ENCODE measurements at regions of chr7 and their contacts with region 1.

Region 1: DNA sequence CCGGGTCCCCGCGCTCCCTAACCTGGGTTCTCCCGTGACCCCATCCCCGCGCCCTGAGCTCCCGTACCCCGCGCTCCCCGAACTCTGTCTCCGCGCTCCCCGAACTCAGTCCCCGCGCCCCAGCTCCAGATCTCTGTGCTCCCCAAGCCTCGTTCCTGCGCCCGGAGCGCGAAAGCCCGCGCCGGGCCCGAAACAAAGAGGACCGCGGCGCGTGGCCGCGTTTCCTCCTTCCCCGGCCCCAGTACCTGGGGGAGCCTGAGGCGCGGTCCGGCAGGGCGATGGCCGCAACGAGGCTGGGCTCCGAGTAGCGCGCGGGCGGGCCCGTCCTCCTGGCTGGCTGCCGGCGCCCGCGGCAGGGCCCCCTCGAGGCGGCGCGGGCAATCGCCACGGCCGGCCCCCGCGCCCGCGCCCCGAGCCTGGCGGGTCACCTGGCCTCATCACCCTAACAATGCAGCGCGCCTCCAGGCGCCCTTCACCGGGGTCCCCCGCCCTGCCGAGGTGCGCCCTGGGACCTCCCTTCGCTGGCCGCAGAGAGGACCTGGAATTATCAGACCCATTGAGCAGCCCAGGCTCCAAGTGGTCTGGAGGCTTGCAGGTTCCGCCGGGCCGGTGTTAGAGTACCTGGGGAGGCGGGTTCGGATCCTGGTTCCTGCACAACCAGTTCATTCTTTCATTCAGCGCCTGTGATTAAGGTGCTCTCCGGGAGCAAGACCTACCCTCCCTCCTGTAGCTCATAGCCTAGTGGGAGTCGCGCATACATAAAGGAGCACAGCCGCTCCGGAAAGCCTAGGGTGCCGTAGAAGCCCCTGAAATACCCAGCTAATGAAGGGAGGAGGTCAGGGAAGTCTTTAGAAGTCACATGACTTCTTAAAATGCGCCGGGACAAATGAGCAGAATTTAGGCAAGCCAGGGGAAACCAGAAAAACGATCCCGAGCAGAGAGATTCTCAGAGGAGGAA is at the start of gene TNS3:
- DNase-seq: no peak
- ATAC-seq: peak; percentile 37 to 50
- H3K4me3 ChIP-seq: peak within 1 kb of the TSS; percentile 70 to 84 (median 74)
- H3K27ac ChIP-seq: peak within 1 kb of the TSS; percentile 62 to 76 (median 70)
- H3K4me1 ChIP-seq: peaks cover 21 to 27% of the 10 kb centered on the region in 2 donors
- H3K27me3 ChIP-seq: peaks cover 0 to 3% (median 0%) of the 10 kb centered on the region in 3 donors
- CTCF ChIP-seq: peak in 4 of 5 experiments; percentile 6 to 41 (median 25)
- POLR2A ChIP-seq: peak in 1 of 2 donors; percentile 20
- total RNA-seq, gene TNS3: 39.4 to 64.3 (median 50.5) TPM

Region 2: GRCh38 chr7:47444379-47445057 is 137.6 kb before region 1 on chr7:
- in situ Hi-C with region 1: loop called in 3 of 4 experiments (anchors 10 to 25 kb)
- intact Hi-C with region 1: loop called (anchors 2 kb)
- DNase-seq: no peak
- ATAC-seq: peak in 1 of 2 donors; percentile 29
- H3K4me3 ChIP-seq: no peak overlapping the region
- H3K27ac ChIP-seq: peak overlapping the region; percentile 91 to 98 (median 94)
- H3K4me1 ChIP-seq: peaks cover 70 to 73% of the 10 kb centered on the region in 2 donors
- H3K27me3 ChIP-seq: no peaks in the 10 kb centered on the region
- CTCF ChIP-seq: peak; percentile 46 to 66 (median 59)
- POLR2A ChIP-seq: no peak

Region 3: GRCh38 chr7:47506382-47507339 is 75.4 kb before region 1 on chr7:
- in situ Hi-C with region 1: no loop called
- intact Hi-C with region 1: loop called (anchors 5 kb)
- DNase-seq: no peak
- ATAC-seq: peak; percentile 15 to 18
- H3K4me3 ChIP-seq: no peak overlapping the region
- H3K27ac ChIP-seq: peak overlapping the region; percentile 57 to 68 (median 64)
- H3K4me1 ChIP-seq: peaks cover 22 to 27% of the 10 kb centered on the region in 2 donors
- H3K27me3 ChIP-seq: no peaks in the 10 kb centered on the region
- CTCF ChIP-seq: no peak
- POLR2A ChIP-seq: no peak

Region 4: DNA sequence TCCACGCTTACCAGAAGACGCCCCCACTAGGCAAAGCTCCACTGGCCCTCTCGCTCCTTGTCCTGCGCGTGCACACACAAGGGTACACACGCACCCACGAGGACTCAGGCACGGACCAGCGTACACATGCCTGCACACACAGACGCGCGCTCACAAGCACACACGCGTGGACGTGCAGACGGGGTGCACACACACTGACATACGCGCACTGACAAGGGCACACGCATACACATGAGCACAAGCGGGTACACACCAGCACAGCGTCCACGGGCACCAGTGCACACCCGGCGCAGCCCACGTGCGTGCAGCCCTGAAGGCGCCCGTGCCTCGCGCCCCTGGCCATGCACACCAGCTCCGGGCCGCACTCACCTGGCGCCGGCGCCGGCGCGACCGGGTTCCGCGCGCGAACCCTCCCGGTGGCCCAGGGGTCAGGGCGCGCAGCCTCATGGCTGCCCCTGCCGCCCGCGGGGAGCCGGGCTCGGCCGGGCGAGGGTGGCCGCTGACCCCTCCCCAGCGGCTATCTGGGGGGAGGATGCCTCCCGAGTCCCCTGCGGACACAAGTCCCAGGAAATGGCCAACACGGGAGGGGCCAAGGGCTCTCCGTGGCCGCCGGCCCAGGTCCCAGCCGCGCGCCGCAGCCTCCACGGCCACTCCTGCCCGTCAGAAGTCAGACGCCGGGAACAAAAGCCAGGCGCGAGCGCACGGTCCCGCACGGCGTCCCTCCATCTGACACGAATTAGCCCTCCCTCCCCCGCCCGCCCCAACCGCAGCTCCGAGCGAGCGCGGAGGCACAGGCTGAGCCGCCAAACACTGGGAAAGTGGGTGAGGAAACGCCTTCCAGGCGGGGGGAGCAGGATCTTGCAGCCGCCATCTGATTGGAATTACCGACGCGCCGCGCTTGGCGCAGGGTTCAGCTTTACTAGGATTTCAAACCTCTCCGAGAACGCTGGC is 45.1 kb before region 1 on chr7:
- in situ Hi-C with region 1: no loop called
- intact Hi-C with region 1: loop called (anchors 5 kb)
- DNase-seq: peak in 1 of 2 donors; percentile 43
- ATAC-seq: peak; percentile 27 to 60
- H3K4me3 ChIP-seq: peak overlapping the region; percentile 53 to 60 (median 56)
- H3K27ac ChIP-seq: peak overlapping the region in 2 of 4 donors; percentile 46 to 70
- H3K4me1 ChIP-seq: peaks cover 25 to 26% of the 10 kb centered on the region in 2 donors
- H3K27me3 ChIP-seq: no peaks in the 10 kb centered on the region
- CTCF ChIP-seq: no peak
- POLR2A ChIP-seq: no peak